Right cardiac atrium (tissue), 5 donors: ENCODE measurements at regions of chr16 and their contacts with region 1.

Region 1: GRCh38 chr16:74606521-74607310 is at the start of gene GLG1:
- DNase-seq: peak; percentile 94 to 98 (median 98)
- ATAC-seq: peak; percentile 98 to 99
- H3K4me3 ChIP-seq: peak within 1 kb of the TSS; percentile 77
- H3K27ac ChIP-seq: peak within 1 kb of the TSS; percentile 90
- H3K4me1 ChIP-seq: peaks cover 2% of the 10 kb centered on the region
- H3K27me3 ChIP-seq: no peaks in the 10 kb centered on the region
- total RNA-seq, gene GLG1: 91.6 to 109 (median 99.2) TPM

Region 2: DNA sequence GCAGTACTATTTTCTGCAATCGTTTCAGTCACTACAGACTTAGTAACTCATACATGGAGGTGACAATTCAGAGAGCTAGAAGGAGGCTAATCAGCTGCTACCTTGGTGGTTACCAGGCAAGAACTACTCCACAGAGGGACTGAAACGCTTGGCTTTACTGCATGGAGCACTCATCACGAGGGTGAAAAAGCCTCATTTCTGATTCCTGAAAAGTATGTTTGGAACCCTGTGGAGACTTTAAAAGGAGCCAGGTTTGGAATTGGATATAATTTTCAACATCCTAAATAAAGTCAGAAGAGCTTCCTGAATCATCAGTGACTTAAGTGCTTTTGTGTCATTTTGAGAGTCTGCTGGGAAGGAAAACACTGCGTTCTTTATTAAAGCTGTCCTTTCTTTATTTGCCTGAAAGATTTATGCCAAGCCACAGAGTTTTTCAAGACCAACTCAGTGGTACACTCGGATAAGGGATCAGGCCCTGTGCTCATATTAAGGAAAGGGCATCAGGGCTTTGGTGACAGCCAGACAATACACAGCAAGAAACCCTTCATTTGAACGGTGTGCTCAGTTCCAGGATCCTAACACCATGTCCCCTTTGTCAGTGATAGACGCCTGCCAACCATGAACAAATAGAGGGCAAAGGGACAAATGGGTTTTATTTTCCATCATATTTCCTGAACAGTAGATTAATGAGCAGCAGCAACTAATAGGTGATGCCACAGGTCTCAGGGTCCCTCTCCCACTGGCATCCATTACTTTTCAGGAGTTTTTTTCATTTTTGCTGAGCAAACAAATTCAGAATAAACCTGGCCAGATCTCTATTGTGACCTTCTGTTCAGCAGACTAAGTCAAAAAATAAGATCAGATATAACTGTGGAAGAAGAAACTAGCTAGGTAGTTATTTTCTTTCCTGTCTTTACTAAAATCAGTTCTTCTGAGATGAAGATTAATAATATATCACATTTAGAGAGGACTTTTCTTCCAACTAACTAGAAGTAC is 104.9 kb before region 1 on chr16:
- intact Hi-C with region 1: loop called in 1 of 4 experiments (anchors 10 kb)
- DNase-seq: no peak
- ATAC-seq: peak; percentile 63 to 69
- H3K4me3 ChIP-seq: no peak overlapping the region
- H3K27ac ChIP-seq: peak overlapping the region; percentile 70
- H3K4me1 ChIP-seq: peaks cover 2% of the 10 kb centered on the region
- H3K27me3 ChIP-seq: no peaks in the 10 kb centered on the region

Region 3: DNA sequence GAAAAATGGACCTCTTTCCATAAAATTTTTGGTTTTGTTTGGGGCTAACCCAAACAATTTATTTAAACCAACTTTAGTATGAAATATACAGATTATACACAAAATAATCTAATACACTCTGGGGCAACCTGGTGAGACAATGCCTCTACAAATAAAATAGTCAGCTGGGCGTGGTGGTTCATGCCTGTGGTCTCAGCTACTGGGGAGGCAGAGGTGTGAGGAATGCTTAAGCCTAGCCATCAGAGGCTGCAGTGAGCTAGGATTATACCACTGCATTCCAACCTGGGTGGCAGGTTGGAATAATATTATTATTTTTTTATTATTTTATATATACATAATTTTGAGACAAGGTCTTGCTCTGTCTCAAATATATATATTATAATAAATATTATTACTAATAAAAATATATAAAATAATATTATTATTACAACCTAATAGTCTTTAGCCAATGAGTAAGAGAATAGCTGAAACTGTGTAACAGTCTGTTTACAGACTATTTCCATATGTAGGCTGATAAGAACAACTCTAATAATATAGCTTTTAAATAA is 50.3 kb before region 1 on chr16:
- intact Hi-C with region 1: loop called in 1 of 4 experiments (anchors 10 kb)
- DNase-seq: no peak
- ATAC-seq: no peak
- H3K4me3 ChIP-seq: no peak overlapping the region
- H3K27ac ChIP-seq: no peak overlapping the region
- H3K4me1 ChIP-seq: peaks cover 8% of the 10 kb centered on the region
- H3K27me3 ChIP-seq: no peaks in the 10 kb centered on the region